Naive thymus-derived CD4-positive, alpha-beta T cell (primary cell): ENCODE measurements at regions of chr1 and their contacts with region 1.

Region 1: GRCh38 chr1:100860397-100860991 is 34.1 kb downstream of the EXTL2 start:
- DNase-seq: no peak
- ATAC-seq: no peak
- H3K4me3 ChIP-seq: no peak overlapping the region
- H3K4me3 Mint-ChIP-seq: no peak overlapping the region
- H3K27ac ChIP-seq: no peak overlapping the region
- H3K27ac Mint-ChIP-seq: no peak overlapping the region
- H3K4me1 ChIP-seq: no peaks in the 10 kb centered on the region
- H3K4me1 Mint-ChIP-seq: no peaks in the 10 kb centered on the region
- H3K27me3 ChIP-seq: no peaks in the 10 kb centered on the region
- H3K27me3 Mint-ChIP-seq: peaks cover 0 to 26% (median 0%) of the 10 kb centered on the region in 5 donors

Region 2: DNA sequence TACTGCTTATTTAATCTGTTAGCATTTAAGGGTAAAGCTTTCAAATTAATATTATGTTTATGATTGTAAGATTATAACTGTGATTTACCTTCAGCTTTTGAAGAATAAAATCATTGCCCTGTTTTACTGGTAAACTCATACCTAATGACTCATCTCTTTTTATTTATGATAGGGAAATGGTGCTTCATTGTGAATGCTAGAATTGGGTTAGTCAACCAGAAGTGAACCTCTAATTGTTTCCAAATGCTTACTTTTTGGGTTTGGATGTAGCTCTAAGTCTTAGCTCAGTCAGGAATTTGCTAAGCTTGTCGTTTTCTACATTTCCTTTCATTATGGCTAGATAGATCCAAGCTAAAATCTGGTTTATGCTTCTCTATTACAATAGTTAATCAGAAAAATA is 94.8 kb after region 1 on chr1:
- CTCF ChIA-PET with region 1: no interaction called
- POLR2A ChIA-PET with region 1: no interaction called
- intact Hi-C with region 1: no loop called
- DNase-seq: no peak
- ATAC-seq: no peak
- H3K4me3 ChIP-seq: no peak overlapping the region
- H3K4me3 Mint-ChIP-seq: peak overlapping the region in 2 of 10 donors; percentile 18 to 22
- H3K27ac ChIP-seq: no peak overlapping the region
- H3K27ac Mint-ChIP-seq: no peak overlapping the region
- H3K4me1 ChIP-seq: peaks cover 5 to 6% of the 10 kb centered on the region in 2 donors
- H3K4me1 Mint-ChIP-seq: peaks cover 17 to 74% (median 57%) of the 10 kb centered on the region in 7 donors
- H3K27me3 ChIP-seq: no peaks in the 10 kb centered on the region
- H3K27me3 Mint-ChIP-seq: no peaks in the 10 kb centered on the region

Region 3: GRCh38 chr1:101002551-101002950 is 142.1 kb after region 1 on chr1:
- CTCF ChIA-PET with region 1: no interaction called
- POLR2A ChIA-PET with region 1: no interaction called
- intact Hi-C with region 1: no loop called
- DNase-seq: no peak
- ATAC-seq: peak; percentile 57
- H3K4me3 ChIP-seq: no peak overlapping the region
- H3K4me3 Mint-ChIP-seq: peak overlapping the region in 7 of 10 donors; percentile 5 to 60 (median 29)
- H3K27ac ChIP-seq: no peak overlapping the region
- H3K27ac Mint-ChIP-seq: peak overlapping the region in 7 of 9 donors; percentile 41 to 95 (median 85)
- H3K4me1 ChIP-seq: peaks cover 28 to 47% of the 10 kb centered on the region in 2 donors
- H3K4me1 Mint-ChIP-seq: peaks cover 42 to 74% (median 56%) of the 10 kb centered on the region in 7 donors
- H3K27me3 ChIP-seq: no peaks in the 10 kb centered on the region
- H3K27me3 Mint-ChIP-seq: no peaks in the 10 kb centered on the region

Region 4: DNA sequence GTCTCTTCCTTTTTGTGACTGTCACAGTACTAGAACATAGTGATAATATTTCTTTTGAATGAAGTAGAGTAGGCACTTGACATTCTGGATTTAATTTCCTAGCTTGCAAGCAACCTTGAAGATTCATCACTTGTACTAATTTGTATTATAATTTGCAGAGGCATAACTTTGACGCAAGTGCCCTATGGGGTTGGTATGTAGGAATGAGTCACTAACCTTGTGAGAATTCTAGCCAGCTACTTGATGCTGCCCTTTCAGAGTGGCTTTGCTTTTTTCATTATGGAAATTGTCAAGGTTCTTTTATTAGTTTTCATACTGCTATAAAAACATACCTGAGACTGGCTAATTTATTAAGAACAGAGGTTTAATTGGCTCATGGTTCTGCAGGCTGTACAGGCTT is 178.8 kb after region 1 on chr1:
- CTCF ChIA-PET with region 1: no interaction called
- POLR2A ChIA-PET with region 1: no interaction called
- intact Hi-C with region 1: no loop called
- DNase-seq: no peak
- ATAC-seq: no peak
- H3K4me3 ChIP-seq: no peak overlapping the region
- H3K4me3 Mint-ChIP-seq: no peak overlapping the region
- H3K27ac ChIP-seq: no peak overlapping the region
- H3K27ac Mint-ChIP-seq: peak overlapping the region in 1 of 9 donors; percentile 3
- H3K4me1 ChIP-seq: no peaks in the 10 kb centered on the region
- H3K4me1 Mint-ChIP-seq: peaks cover 12 to 42% (median 32%) of the 10 kb centered on the region in 7 donors
- H3K27me3 ChIP-seq: no peaks in the 10 kb centered on the region
- H3K27me3 Mint-ChIP-seq: no peaks in the 10 kb centered on the region

Region 5: DNA sequence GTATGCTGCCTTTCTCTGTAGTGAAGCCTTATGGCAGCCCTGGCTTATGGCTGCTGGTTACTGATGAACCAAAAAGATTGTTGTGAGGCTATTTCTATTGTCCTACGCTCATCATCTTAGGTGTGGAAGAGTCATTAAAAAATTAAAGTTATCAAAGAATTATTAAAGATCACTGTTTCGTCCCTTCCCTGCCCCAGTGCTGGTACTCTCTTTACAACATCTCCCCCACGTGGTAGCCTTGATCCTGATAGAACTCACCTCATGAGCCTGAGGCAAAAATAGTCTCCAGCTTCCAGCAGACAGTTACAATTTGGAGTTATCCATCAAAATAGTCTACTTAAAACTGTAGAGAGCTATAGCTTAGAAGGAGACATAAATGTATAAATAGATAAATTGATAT is 577.9 kb after region 1 on chr1:
- CTCF ChIA-PET with region 1: no interaction called
- POLR2A ChIA-PET with region 1: no interaction called
- intact Hi-C with region 1: loop called in 1 of 2 experiments (anchors 5 kb)
- DNase-seq: no peak
- ATAC-seq: no peak
- H3K4me3 ChIP-seq: no peak overlapping the region
- H3K4me3 Mint-ChIP-seq: no peak overlapping the region
- H3K27ac ChIP-seq: no peak overlapping the region
- H3K27ac Mint-ChIP-seq: no peak overlapping the region
- H3K4me1 ChIP-seq: no peaks in the 10 kb centered on the region
- H3K4me1 Mint-ChIP-seq: no peaks in the 10 kb centered on the region
- H3K27me3 ChIP-seq: no peaks in the 10 kb centered on the region
- H3K27me3 Mint-ChIP-seq: peaks cover 0 to 33% (median 3%) of the 10 kb centered on the region in 5 donors